ENCODE measurements at regions of chr2 and their contacts with region 1.

Region 1: DNA sequence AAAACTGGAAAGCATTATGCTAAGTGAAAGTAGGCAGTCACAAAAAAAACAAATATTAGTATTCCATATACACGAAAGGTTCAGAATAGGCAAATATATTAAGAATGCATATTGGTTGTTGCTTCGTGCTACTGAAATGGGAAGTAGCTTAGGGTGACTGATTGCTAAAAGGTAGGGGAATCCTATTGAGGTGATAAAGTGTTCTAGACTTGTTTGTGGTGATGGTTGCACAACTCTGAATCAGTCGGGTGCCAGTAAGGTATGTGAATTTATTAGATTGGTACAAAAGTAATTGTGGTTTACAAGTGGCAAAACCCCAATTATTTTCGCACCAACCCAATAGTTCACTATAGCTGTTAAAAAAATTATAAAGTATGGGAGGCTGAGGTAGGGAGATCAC is 20.7 kb downstream of the USP34 start:
- DNase-seq: no peak
- H3K4me3 ChIP-seq: no peak overlapping the region
- H3K27ac ChIP-seq: no peak overlapping the region
- H3K4me1 ChIP-seq: no peaks in the 10 kb centered on the region
- H3K27me3 ChIP-seq: no peaks in the 10 kb centered on the region
- CTCF ChIP-seq: no peak

Region 2: DNA sequence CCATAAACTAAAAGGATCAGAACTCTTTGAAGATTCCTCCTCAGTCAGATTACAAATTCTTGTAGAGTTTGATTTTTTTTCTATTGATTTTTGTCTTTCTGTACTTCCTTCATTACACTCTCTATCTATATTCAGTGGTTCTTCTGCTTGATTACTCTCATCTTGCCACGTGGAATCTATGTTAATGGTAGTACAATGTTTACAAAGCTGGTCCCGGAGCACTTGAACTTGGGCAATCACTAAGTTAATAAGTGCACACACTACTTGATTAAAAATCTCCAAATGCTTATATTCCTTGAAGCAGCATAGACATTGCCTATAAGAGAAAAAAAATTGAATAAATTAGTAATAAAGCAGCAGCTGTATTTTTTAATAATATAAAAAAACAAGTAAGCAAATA is 44.3 kb before region 1 on chr2:
- CTCF ChIA-PET with region 1: no interaction called
- POLR2A ChIA-PET with region 1: interaction called, 26 read pairs
- intact Hi-C with region 1: no loop called
- DNase-seq: no peak
- H3K4me3 ChIP-seq: no peak overlapping the region
- H3K27ac ChIP-seq: no peak overlapping the region
- H3K4me1 ChIP-seq: no peaks in the 10 kb centered on the region
- H3K27me3 ChIP-seq: no peaks in the 10 kb centered on the region
- CTCF ChIP-seq: no peak

Region 3: DNA sequence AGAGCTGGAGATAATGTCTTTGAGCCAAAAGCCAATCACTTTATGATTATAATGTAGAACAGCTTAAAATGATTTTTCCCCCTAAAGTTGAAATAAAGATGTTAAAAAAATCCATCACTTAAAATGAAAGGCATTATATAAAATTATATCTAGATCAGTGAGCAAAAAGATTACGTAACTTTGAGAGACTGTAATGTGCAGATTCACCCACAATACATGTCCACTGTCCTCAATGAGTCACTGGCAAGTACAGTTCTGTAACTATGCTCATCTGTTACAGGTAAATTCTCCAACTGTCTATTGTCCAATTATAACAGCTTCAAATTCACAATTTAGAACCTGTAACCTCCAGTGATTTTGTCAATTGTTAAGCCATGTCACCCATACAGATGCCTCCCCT is 384.7 kb after region 1 on chr2:
- CTCF ChIA-PET with region 1: no interaction called
- POLR2A ChIA-PET with region 1: no interaction called
- intact Hi-C with region 1: no loop called
- DNase-seq: no peak
- H3K4me3 ChIP-seq: no peak overlapping the region
- H3K27ac ChIP-seq: no peak overlapping the region
- H3K4me1 ChIP-seq: no peaks in the 10 kb centered on the region
- H3K27me3 ChIP-seq: no peaks in the 10 kb centered on the region
- CTCF ChIP-seq: no peak

Measured in PC-9 (cell line).